SK-N-SH (cell line): ENCODE measurements at regions of chr22 and their contacts with region 1.

Region 1: GRCh38 chr22:24938741-24939341 is 7.7 kb downstream of the LHFPL7 start:
- DNase-seq: peak; percentile 76
- H3K4me3 ChIP-seq: no peak overlapping the region; a peak in 1 of 4 replicates
- H3K27ac ChIP-seq: no peak overlapping the region
- H3K4me1 ChIP-seq: peaks cover 0 to 3% of the 10 kb centered on the region in 2 experiments; a peak in 1 of 4 replicates
- H3K27me3 ChIP-seq: 0 out of 2 replicates have a peak, but pooled peaks cover 12% of the 10 kb centered on the region
- CTCF ChIP-seq: peak; percentile 86
- EP300 ChIP-seq: no peak
- RAD21 ChIP-seq: peak; percentile 79

Region 2: DNA sequence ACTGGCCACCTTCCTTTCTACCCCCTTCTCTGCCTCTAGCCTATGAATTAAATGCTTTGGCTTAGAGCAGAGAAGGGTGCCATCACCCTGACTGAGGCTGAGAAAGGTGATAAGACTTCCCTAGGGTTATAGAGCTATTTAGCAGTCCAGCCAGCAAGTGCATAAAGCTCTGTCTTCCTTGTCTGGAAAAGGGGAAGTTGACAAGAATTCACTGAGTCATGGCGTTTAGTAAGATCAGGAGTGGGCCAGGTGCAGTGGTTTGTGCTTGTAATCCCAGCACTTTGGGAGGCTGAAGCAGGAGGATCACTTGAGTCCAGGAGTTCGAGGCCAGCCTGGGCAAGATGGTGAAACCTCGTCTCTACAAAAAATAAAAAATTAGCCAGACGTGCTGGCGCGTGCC is 55.4 kb before region 1 on chr22:
- CTCF ChIA-PET with region 1: no interaction called
- POLR2A ChIA-PET with region 1: no interaction called
- DNase-seq: no peak
- H3K4me3 ChIP-seq: no peak overlapping the region
- H3K27ac ChIP-seq: no peak overlapping the region
- H3K4me1 ChIP-seq: no peaks in the 10 kb centered on the region
- H3K27me3 ChIP-seq: no peaks in the 10 kb centered on the region; the same call in 1 of the 2 replicates
- CTCF ChIP-seq: no peak
- EP300 ChIP-seq: no peak
- RAD21 ChIP-seq: no peak

Region 3: DNA sequence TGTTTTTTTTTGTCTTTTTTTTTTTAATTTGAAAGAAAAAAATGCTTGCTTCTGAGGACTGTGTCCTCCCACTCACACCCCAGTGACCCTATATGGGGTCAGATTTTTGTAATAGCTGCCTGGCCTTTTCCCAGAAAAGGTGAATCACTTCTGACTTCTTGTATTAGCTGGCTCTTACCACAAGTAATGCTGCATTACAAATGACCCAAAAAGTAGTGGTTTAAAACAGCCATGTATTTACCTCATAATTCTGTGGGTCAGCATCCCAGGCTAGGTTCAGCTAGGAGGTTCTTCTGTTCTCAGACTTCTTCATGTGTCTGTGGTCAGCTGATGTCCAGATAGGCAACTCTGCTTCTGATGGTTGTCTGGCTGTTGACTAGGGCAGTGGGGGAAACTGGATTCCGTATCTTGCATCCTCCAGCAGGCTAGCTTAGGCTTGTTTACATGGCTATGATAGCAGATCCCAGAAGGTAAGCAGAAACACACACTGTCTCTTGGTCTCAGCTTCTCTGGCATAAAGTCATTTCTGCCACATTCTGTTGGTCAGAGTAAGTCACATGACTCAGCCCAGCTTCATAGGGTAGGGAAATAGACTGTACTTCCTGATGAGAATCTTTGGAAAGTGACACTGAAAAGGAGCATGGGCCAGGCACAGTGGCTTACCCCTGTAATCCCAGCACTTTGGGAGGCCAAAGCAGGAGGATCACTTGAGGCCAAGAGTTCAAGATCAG is 11.8 kb before region 1 on chr22:
- CTCF ChIA-PET with region 1: interaction called, 36 read pairs
- POLR2A ChIA-PET with region 1: no interaction called
- DNase-seq: no peak
- H3K4me3 ChIP-seq: no peak overlapping the region
- H3K27ac ChIP-seq: no peak overlapping the region
- H3K4me1 ChIP-seq: no peaks in the 10 kb centered on the region
- H3K27me3 ChIP-seq: no peaks in the 10 kb centered on the region
- CTCF ChIP-seq: no peak
- EP300 ChIP-seq: no peak
- RAD21 ChIP-seq: no peak

Region 4: DNA sequence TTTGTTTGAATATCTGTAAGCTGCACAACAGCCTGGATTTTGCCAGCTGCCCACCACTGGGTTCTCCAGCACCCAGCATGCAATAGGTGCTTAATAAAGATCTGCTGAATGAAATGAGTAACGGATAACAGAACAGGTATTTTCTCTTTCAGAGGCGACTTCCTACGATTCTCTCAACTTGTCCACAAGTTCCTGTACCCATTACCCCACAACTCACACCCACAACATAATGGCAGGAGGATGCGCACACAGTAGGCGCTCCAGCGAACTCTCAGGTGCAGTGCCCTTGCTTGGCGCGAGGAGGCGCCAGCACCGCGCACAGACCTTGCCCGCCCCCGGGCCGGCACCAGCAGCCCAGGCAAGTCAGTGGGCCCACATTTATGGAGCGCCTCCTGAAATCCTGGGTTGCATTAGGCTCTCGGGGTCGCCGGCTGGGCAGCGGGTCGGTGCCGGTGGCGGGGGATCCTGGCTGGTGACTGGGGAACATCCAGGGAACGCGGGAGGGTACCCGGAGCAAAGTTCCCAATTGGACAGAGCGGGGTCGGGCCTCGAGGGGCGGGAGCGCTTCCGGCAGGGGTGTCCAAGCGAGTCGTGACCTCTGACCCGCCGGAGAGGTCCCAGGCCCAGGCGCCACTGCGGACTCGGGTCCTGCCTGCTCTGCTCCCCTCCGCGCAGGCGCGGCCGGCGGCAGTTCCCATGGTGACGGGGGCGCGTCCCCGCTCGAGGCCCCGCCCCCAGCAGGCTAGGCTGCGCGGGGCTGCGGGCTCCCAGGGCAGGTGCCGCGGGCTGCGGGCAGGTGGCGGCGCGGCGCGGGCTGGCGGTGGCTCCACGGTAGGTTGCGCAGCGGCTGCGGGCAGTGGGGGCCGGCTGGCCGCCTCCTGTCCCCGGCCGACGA is 13.3 kb after region 1 on chr22 and contains the start of gene KIAA1671:
- CTCF ChIA-PET with region 1: interaction called, 18 read pairs
- POLR2A ChIA-PET with region 1: no interaction called
- DNase-seq: peak; percentile 99
- H3K4me3 ChIP-seq: peak within 1 kb of the TSS; percentile 73 to 93
- H3K27ac ChIP-seq: peak within 1 kb of the TSS; percentile 82 to 87
- H3K4me1 ChIP-seq: peaks cover 14 to 15% of the 10 kb centered on the region in 2 experiments; a peak in 3 of 4 replicates
- H3K27me3 ChIP-seq: no peaks in the 10 kb centered on the region
- CTCF ChIP-seq: peak; percentile 97
- EP300 ChIP-seq: no peak
- RAD21 ChIP-seq: peak; percentile 91
- polyA plus RNA-seq, gene KIAA1671: 7.0 and 7.4 TPM in 2 replicates

Region 5: GRCh38 chr22:24996420-24996952 is 57.6 kb after region 1 on chr22:
- CTCF ChIA-PET with region 1: no interaction called
- POLR2A ChIA-PET with region 1: no interaction called
- DNase-seq: peak; percentile 44
- H3K4me3 ChIP-seq: no peak overlapping the region
- H3K27ac ChIP-seq: peak overlapping the region; percentile 16 to 30; a peak in 2 of 4 replicates
- H3K4me1 ChIP-seq: peaks cover 16 to 19% of the 10 kb centered on the region in 2 experiments; a peak in 3 of 4 replicates
- H3K27me3 ChIP-seq: no peaks in the 10 kb centered on the region
- CTCF ChIP-seq: no peak
- EP300 ChIP-seq: no peak
- RAD21 ChIP-seq: no peak

Region 6: DNA sequence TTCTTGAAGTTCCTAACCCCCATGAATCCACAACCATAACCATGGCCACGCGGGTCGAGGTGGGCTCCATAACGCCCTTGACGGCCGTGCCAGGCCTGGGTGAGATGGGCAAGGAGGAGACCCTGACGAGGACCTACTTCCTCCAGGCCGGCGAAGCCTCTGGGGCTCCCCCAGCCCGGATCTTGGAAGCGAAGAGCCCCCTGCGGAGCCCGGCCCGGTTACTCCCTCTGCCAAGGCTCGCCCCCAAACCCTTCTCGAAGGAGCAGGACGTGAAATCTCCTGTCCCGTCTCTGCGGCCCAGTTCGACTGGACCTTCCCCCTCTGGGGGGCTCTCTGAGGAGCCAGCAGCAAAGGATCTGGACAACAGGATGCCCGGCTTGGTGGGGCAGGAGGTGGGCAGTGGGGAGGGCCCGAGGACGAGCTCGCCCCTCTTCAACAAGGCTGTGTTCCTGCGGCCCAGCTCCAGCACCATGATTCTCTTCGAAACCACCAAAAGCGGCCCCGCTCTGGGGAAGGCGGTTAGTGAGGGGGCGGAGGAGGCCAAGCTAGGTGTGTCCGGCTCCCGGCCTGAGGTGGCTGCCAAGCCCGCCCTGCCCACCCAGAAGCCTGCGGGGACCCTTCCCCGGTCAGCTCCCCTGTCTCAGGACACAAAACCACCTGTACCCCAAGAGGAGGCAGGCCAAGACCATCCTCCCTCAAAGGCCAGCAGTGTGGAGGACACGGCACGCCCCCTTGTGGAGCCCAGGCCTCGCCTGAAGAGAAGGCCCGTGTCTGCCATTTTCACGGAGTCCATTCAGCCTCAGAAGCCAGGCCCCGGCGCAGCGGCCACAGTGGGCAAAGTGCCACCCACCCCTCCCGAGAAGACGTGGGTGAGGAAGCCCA is 89.4 kb after region 1 on chr22:
- CTCF ChIA-PET with region 1: interaction called, 32 read pairs
- POLR2A ChIA-PET with region 1: no interaction called
- DNase-seq: peak; percentile 66
- H3K4me3 ChIP-seq: no peak overlapping the region
- H3K27ac ChIP-seq: no peak overlapping the region
- H3K4me1 ChIP-seq: peaks cover 13% of the 10 kb centered on the region in 2 experiments; a peak in 1 of 4 replicates
- H3K27me3 ChIP-seq: no peaks in the 10 kb centered on the region
- CTCF ChIP-seq: peak; percentile 56
- EP300 ChIP-seq: no peak
- RAD21 ChIP-seq: peak; percentile 69